ENCODE measurements at regions of chr7 and their contacts with region 1.

Region 1: GRCh38 chr7:85292908-85293576 is 106.2 kb upstream of the SEMA3D start:
- DNase-seq: no peak
- ATAC-seq: peak; percentile 55
- H3K4me3 Mint-ChIP-seq: peak overlapping the region; percentile 42
- H3K27ac Mint-ChIP-seq: peak overlapping the region; percentile 80
- H3K4me1 Mint-ChIP-seq: peaks cover 63% of the 10 kb centered on the region
- H3K27me3 Mint-ChIP-seq: no peaks in the 10 kb centered on the region
- CTCF ChIP-seq: no peak

Region 2: GRCh38 chr7:85160223-85160622 is 132.8 kb before region 1 on chr7:
- CTCF ChIA-PET with region 1: no interaction called
- POLR2A ChIA-PET with region 1: no interaction called
- intact Hi-C with region 1: loop called (anchors 1 kb)
- DNase-seq: no peak
- ATAC-seq: peak; percentile 31
- H3K4me3 Mint-ChIP-seq: peak overlapping the region; percentile 2
- H3K27ac Mint-ChIP-seq: no peak overlapping the region
- H3K4me1 Mint-ChIP-seq: peaks cover 8% of the 10 kb centered on the region
- H3K27me3 Mint-ChIP-seq: no peaks in the 10 kb centered on the region
- CTCF ChIP-seq: no peak

Region 3: GRCh38 chr7:85230623-85231022 is 62.4 kb before region 1 on chr7:
- CTCF ChIA-PET with region 1: no interaction called
- POLR2A ChIA-PET with region 1: no interaction called
- intact Hi-C with region 1: loop called (anchors 1 kb)
- DNase-seq: no peak
- ATAC-seq: peak; percentile 65
- H3K4me3 Mint-ChIP-seq: peak overlapping the region; percentile 46
- H3K27ac Mint-ChIP-seq: peak overlapping the region; percentile 16
- H3K4me1 Mint-ChIP-seq: peaks cover 20% of the 10 kb centered on the region
- H3K27me3 Mint-ChIP-seq: no peaks in the 10 kb centered on the region
- CTCF ChIP-seq: no peak

Measured in activated B cell treated with CpG ODN at 0.5 μM for 24 hours (primary cell).